WTC11 (cell line): ENCODE measurements at regions of chr5 and their contacts with region 1.

Region 1: GRCh38 chr5:96614110-96614691 is 48.0 kb upstream of the CAST start:
- DNase-seq: peak; percentile 43
- ATAC-seq: peak; percentile 96
- H3K4me3 Mint-ChIP-seq: no peak overlapping the region
- H3K27ac Mint-ChIP-seq: no peak overlapping the region
- H3K4me1 Mint-ChIP-seq: peaks cover 3% of the 10 kb centered on the region
- H3K27me3 Mint-ChIP-seq: no peaks in the 10 kb centered on the region; the same call in 1 of the 2 replicates
- CTCF ChIP-seq: peak; percentile 43; the same call in 1 of the 2 replicates

Region 2: DNA sequence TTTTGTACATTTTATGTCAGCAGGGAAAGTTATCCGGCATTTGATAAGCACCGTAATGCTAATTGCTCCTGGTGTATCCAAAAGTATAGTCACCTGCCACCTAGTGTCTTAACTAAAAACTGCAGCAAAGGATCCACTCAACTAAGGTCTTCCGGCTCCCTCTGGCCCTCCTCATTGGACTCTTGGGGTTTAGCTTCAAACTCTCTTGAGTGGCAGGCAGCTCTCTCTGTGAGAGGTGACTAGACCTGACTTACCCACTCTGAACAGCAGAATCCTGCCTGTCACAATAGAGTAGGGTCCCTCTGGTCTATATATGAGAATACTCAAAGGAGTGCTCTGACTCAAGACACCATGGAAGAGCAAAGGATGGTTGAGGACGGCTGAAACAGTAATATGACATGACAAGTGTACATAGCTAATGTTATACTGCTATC is 12.4 kb before region 1 on chr5:
- CTCF ChIA-PET with region 1: interaction called, 10 read pairs
- POLR2A ChIA-PET with region 1: no interaction called
- DNase-seq: peak; percentile 19
- ATAC-seq: peak; percentile 91
- H3K4me3 Mint-ChIP-seq: no peak overlapping the region
- H3K27ac Mint-ChIP-seq: no peak overlapping the region
- H3K4me1 Mint-ChIP-seq: peaks cover 8% of the 10 kb centered on the region
- H3K27me3 Mint-ChIP-seq: peaks cover 3% of the 10 kb centered on the region
- CTCF ChIP-seq: peak; percentile 42

Region 3: DNA sequence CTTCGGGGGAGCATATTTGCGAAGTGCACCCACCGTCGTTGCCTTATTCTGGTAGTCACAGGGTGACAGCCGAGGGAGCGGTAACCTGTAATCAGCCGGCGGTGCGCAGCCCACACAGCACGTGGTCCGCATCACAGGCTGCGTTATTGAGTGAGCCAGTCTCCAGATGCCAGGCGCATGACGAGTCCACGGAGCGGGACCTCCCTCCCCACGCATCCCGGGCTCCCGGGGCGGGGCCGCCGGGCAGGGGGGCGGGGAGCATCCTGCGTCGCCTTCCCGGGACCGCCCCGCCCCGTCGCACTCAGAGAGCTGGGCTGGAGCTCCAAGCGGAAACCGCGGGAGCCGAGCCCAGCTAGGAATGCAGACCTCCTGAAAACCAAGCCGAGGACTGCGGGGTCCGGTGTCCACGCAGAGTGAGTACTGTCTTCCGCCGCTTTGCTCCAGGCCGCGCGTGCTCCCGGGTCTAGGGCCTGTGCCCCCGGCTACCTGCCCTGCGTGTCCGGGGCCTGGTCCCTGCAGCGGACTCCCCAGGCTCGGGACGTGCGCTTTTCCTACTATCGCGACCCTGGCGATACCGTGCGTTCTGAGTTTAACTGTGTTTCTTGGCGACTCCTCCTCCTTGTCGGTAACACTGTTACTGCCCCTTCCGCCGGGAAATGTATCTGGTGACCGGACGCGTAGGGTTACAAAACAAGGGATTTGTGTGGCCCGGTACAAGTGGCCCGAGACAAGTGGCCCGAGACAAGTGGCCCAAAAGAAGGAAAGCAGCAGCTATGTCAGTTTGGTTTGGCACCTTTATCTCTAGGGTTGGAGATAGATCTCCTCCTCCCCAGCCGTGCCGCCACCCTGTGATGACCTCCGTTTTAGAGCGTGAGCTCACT is 88.5 kb after region 1 on chr5:
- CTCF ChIA-PET with region 1: interaction called, 10 read pairs
- POLR2A ChIA-PET with region 1: interaction called, 3 read pairs
- DNase-seq: peak; percentile 71
- ATAC-seq: peak; percentile 85
- H3K4me3 Mint-ChIP-seq: peak overlapping the region; percentile 89
- H3K27ac Mint-ChIP-seq: peak overlapping the region; percentile 85
- H3K4me1 Mint-ChIP-seq: peaks cover 25% of the 10 kb centered on the region
- H3K27me3 Mint-ChIP-seq: peaks cover 8% of the 10 kb centered on the region; the same call in 1 of the 2 replicates
- CTCF ChIP-seq: no peak

Region 4: DNA sequence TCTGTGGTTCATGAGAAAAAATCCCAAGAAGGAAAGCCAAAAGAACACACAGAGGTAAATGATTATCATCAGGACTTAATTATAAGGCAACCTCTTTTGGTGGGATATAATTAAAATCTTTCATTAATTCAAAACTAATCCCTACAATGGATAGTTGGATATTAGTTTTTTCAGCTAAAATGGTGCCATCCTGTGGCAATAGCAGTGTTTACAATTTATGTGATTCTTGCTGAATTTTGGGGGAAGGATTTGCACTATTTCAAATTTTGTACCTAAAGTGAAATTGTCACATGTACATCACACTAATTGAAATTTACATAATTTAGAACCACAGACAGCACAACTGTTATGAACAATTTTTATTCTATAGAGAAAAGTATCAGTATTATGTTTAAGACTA is 115.0 kb after region 1 on chr5:
- CTCF ChIA-PET with region 1: interaction called, 12 read pairs
- POLR2A ChIA-PET with region 1: no interaction called
- DNase-seq: no peak
- ATAC-seq: no peak
- H3K4me3 Mint-ChIP-seq: no peak overlapping the region
- H3K27ac Mint-ChIP-seq: no peak overlapping the region
- H3K4me1 Mint-ChIP-seq: peaks cover 10% of the 10 kb centered on the region
- H3K27me3 Mint-ChIP-seq: no peaks in the 10 kb centered on the region
- CTCF ChIP-seq: no peak

Region 5: DNA sequence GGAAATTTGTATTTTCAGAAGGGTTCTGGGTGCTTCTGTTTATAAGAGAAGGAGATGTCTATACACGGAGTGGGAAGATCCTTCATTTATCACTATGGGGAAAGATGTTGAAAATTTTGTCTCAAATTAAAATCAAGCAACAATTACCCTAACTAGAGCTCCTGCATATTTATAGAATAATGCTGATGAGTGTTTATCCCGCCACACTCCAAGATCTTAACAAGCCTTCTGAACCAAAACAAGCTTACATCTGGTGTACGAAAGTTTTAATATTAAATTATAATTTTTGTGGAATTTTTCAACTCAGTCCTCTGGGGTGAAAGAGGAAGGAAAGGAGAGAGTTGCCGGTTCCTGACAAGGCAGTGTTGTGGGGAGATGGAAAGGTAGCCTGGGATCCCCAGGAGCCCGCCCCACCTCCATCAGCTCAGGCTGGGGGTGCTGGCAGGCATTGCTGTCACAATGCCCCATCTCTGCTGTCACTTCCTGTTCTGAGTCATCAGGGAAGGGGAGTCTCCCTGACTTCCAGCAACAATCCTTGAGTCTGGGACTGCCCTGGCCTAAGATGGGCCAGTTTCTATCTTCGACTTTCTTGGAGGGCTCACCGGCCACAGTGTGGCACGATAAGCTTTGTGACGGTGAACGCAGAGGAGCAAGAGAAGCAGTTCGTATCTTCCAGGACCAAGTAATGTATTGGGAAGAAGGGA is 129.0 kb after region 1 on chr5:
- CTCF ChIA-PET with region 1: interaction called, 14 read pairs
- POLR2A ChIA-PET with region 1: no interaction called
- DNase-seq: no peak
- ATAC-seq: peak; percentile 70
- H3K4me3 Mint-ChIP-seq: no peak overlapping the region
- H3K27ac Mint-ChIP-seq: peak overlapping the region; percentile 83
- H3K4me1 Mint-ChIP-seq: peaks cover 13% of the 10 kb centered on the region
- H3K27me3 Mint-ChIP-seq: no peaks in the 10 kb centered on the region
- CTCF ChIP-seq: no peak